ENCODE measurements at regions of chr18 and their contacts with region 1.

Region 1: DNA sequence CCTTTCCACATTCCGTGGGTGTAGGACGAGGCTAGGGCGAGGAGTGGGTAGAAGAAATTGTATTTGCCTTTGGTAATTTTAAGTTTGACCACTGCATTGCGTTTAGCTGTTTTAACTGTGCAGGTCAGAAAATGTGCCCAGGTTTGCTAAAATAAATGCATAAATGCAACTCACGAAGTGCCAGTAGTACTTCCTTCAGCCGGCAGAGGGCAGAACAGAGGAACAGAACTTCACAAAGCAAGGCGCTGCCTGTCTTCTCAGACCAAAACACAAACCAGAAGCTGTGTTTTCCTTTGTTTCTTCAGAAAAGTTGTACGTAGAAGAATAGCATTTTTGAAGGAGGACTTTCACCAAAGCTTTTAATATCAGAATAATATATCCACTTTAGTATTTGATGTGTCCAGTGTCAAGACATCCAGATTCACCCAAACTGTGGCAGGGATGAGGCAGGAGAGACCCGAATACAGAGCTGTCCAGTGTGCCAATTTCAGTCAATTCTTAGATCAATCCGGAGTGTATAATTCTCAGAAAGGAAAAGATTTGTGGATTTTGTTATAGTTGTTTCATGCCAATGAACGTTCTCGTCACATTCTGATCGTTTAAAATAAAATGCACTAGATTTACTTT is 348.6 kb downstream of the DLGAP1 start:
- DNase-seq: peak in 33 of 35 experiments; percentile 3 to 63 (median 27)
- ATAC-seq: peak in 2 of 4 experiments; percentile 45 to 61
- H3K4me3 ChIP-seq: no peak overlapping the region
- H3K4me3 Mint-ChIP-seq: no peak overlapping the region
- H3K27ac ChIP-seq: no peak overlapping the region
- H3K27ac Mint-ChIP-seq: no peak overlapping the region
- H3K4me1 ChIP-seq: no peaks in the 10 kb centered on the region
- H3K4me1 Mint-ChIP-seq: peaks cover 0 to 2% (median 0%) of the 10 kb centered on the region in 3 donors
- H3K27me3 ChIP-seq: no peaks in the 10 kb centered on the region
- H3K27me3 Mint-ChIP-seq: peaks cover 3 to 4% of the 10 kb centered on the region in 2 donors

Region 2: DNA sequence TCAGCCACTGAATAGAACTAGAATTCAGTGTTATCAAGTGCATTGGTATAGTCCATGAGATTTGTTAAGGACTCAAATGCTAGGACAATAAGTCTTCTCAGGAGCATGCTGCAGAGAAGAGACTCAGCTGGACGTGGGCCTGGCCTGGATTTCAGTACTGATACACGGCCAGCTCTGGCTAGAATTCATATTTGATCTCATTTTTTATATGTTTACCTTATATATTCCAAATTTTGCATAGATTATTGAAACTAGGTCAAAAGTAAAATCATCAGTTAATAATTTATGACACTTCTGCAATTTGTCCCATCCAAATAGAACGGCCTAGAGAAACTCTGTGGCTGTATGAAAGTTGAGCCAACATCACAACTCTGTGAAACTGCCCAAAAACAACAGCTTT is 86.6 kb after region 1 on chr18:
- CTCF ChIA-PET with region 1: no interaction called
- POLR2A ChIA-PET with region 1: no interaction called
- DNase-seq: no peak
- ATAC-seq: no peak
- H3K4me3 ChIP-seq: no peak overlapping the region
- H3K4me3 Mint-ChIP-seq: no peak overlapping the region
- H3K27ac ChIP-seq: no peak overlapping the region
- H3K27ac Mint-ChIP-seq: no peak overlapping the region
- H3K4me1 ChIP-seq: no peaks in the 10 kb centered on the region
- H3K4me1 Mint-ChIP-seq: no peaks in the 10 kb centered on the region
- H3K27me3 ChIP-seq: no peaks in the 10 kb centered on the region
- H3K27me3 Mint-ChIP-seq: no peaks in the 10 kb centered on the region

Region 3: GRCh38 chr18:5057386-5058348 is 951.1 kb after region 1 on chr18:
- CTCF ChIA-PET with region 1: interaction called, 15 to 22 read pairs
- POLR2A ChIA-PET with region 1: no interaction called
- DNase-seq: peak in 29 of 35 experiments; percentile 1 to 65 (median 29)
- ATAC-seq: peak in 2 of 4 experiments; percentile 33 to 48
- H3K4me3 ChIP-seq: no peak overlapping the region
- H3K4me3 Mint-ChIP-seq: no peak overlapping the region
- H3K27ac ChIP-seq: no peak overlapping the region
- H3K27ac Mint-ChIP-seq: no peak overlapping the region
- H3K4me1 ChIP-seq: peaks cover 5 to 11% of the 10 kb centered on the region in 2 experiments
- H3K4me1 Mint-ChIP-seq: peaks cover 20 to 22% (median 20%) of the 10 kb centered on the region in 3 donors
- H3K27me3 ChIP-seq: peaks cover 0 to 3% of the 10 kb centered on the region in 2 experiments
- H3K27me3 Mint-ChIP-seq: peaks cover 0 to 5% of the 10 kb centered on the region in 2 donors

Region 4: GRCh38 chr18:5370332-5370731 is 1263.8 kb after region 1 on chr18:
- CTCF ChIA-PET with region 1: interaction called in 1 of 2 experiments, 12 read pairs
- POLR2A ChIA-PET with region 1: no interaction called
- DNase-seq: no peak
- ATAC-seq: no peak
- H3K4me3 ChIP-seq: no peak overlapping the region
- H3K4me3 Mint-ChIP-seq: no peak overlapping the region
- H3K27ac ChIP-seq: no peak overlapping the region
- H3K27ac Mint-ChIP-seq: no peak overlapping the region
- H3K4me1 ChIP-seq: no peaks in the 10 kb centered on the region
- H3K4me1 Mint-ChIP-seq: no peaks in the 10 kb centered on the region
- H3K27me3 ChIP-seq: peaks cover 2 to 4% of the 10 kb centered on the region in 2 experiments
- H3K27me3 Mint-ChIP-seq: peaks cover 12 to 17% of the 10 kb centered on the region in 2 donors